GM10248 (cell line): ENCODE measurements at regions of chr18 and their contacts with region 1.

Region 1: GRCh38 chr18:44887227-44887631 is 206.5 kb downstream of the SETBP1 start:
- DNase-seq: peak; percentile 32
- CTCF ChIP-seq: no peak

Region 2: GRCh38 chr18:44870631-44871502 is 16.4 kb before region 1 on chr18:
- CTCF ChIA-PET with region 1: interaction called, 11 read pairs
- POLR2A ChIA-PET with region 1: no interaction called
- DNase-seq: no peak
- CTCF ChIP-seq: peak; percentile 27

Region 3: GRCh38 chr18:44904768-44905167 is 17.5 kb after region 1 on chr18:
- CTCF ChIA-PET with region 1: interaction called, 21 read pairs
- POLR2A ChIA-PET with region 1: no interaction called
- DNase-seq: no peak
- CTCF ChIP-seq: no peak

Region 4: GRCh38 chr18:44968336-44968735 is 81.1 kb after region 1 on chr18:
- CTCF ChIA-PET with region 1: no interaction called
- POLR2A ChIA-PET with region 1: no interaction called
- DNase-seq: no peak
- CTCF ChIP-seq: no peak